Left ventricle myocardium inferior (tissue), 1 donor: ENCODE measurements at regions of chr6 and their contacts with region 1.

Region 1: DNA sequence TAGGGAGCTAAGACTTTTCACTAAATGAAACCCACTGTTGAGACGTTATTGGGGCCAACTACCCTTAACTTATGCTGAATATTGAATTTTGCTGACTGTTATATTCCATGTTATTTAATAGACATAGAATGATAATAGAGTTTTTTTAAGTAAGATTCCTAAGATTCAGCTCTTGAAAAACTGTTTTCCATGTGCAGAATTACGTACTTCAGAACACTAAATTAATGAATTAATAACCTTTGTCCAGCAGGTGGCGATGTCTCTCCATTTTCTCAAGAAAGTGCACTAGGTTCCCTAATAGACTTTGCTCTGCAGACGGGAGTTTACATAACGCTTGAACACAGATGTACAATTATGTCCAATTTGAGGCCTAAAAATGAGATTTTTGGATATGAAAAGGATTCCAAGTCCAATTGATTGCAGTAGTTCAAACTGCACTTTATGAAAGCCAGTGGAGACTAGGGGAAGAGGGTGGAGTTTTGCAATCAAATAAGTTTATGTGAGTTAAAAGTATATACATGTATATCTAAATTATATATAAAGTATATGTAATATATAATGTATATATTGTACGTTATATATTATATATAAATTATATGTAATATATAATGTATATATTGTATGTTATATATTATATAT is 282.1 kb downstream of the UST start:
- DNase-seq: no peak
- H3K4me3 ChIP-seq: no peak overlapping the region
- H3K27ac ChIP-seq: no peak overlapping the region
- H3K4me1 ChIP-seq: peaks cover 6% of the 10 kb centered on the region
- H3K27me3 ChIP-seq: no peaks in the 10 kb centered on the region
- CTCF ChIP-seq: peak; percentile 77

Region 2: GRCh38 chr6:149438855-149439254 is 410.0 kb after region 1 on chr6:
- intact Hi-C with region 1: loop called (anchors 5 kb)
- DNase-seq: no peak
- H3K4me3 ChIP-seq: no peak overlapping the region
- H3K27ac ChIP-seq: no peak overlapping the region
- H3K4me1 ChIP-seq: no peaks in the 10 kb centered on the region
- H3K27me3 ChIP-seq: peaks cover 23% of the 10 kb centered on the region
- CTCF ChIP-seq: no peak

Region 3: GRCh38 chr6:149515494-149515893 is 486.6 kb after region 1 on chr6:
- intact Hi-C with region 1: loop called (anchors 5 kb)
- DNase-seq: no peak
- H3K4me3 ChIP-seq: no peak overlapping the region
- H3K27ac ChIP-seq: no peak overlapping the region
- H3K4me1 ChIP-seq: peaks cover 12% of the 10 kb centered on the region
- H3K27me3 ChIP-seq: no peaks in the 10 kb centered on the region
- CTCF ChIP-seq: no peak